Caco-2 (cell line): ENCODE measurements at regions of chr17 and their contacts with region 1.

Region 1: DNA sequence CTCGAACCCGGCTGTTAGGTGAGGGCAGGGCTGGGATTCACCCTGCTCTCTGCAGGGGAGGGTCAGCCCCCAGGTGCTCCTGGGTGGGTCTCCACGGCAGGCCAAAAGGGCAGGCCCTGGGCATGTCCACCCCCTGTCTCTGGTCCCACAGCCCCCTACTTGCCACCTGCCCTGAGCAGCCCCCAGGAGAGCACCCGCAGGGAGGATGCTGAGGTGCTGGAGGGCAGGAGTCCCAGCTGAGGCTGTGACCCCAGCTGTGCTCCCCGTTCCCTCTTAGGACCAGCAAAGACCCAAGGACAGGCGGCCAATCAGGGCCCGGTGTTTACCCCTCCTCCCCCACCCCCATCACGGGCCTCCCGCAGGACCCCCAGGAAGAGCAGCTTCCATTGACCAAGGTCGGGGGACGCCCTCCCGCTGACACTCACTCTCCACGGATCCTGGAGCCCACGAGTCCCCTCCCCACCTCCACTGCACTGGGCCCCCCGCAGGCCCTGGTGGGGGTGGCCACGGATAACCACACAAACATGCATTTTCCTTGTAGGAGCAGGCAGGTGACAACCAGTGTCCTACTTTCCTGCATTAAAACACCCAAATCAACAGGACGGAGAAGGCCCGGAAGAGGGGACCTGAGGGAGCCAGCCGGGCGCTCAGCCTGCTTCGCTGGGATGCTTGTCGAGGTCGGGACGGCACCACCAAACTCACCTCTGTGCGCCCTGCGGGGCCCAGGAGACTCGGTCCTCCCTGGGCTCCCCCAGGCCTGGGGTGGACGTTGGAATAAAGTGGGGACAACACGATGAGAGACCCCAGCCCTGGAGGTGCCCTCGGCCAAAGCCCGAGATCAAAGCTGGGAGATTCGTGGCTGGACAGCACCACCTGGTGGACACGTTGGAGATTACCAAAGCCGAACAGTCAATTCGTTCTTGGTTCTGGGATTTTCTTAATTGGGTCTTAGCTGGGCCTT is 22.5 kb upstream of the ENPP7 start:
- DNase-seq: peak; percentile 67 to 76
- H3K4me3 ChIP-seq: no peak overlapping the region
- H3K4me3 Mint-ChIP-seq: no peak overlapping the region
- H3K27ac Mint-ChIP-seq: no peak overlapping the region
- H3K4me1 ChIP-seq: no peaks in the 10 kb centered on the region
- H3K4me1 Mint-ChIP-seq: no peaks in the 10 kb centered on the region
- H3K27me3 ChIP-seq: no peaks in the 10 kb centered on the region
- H3K27me3 Mint-ChIP-seq: no peaks in the 10 kb centered on the region
- CTCF ChIP-seq: peak; percentile 78 to 94

Region 2: DNA sequence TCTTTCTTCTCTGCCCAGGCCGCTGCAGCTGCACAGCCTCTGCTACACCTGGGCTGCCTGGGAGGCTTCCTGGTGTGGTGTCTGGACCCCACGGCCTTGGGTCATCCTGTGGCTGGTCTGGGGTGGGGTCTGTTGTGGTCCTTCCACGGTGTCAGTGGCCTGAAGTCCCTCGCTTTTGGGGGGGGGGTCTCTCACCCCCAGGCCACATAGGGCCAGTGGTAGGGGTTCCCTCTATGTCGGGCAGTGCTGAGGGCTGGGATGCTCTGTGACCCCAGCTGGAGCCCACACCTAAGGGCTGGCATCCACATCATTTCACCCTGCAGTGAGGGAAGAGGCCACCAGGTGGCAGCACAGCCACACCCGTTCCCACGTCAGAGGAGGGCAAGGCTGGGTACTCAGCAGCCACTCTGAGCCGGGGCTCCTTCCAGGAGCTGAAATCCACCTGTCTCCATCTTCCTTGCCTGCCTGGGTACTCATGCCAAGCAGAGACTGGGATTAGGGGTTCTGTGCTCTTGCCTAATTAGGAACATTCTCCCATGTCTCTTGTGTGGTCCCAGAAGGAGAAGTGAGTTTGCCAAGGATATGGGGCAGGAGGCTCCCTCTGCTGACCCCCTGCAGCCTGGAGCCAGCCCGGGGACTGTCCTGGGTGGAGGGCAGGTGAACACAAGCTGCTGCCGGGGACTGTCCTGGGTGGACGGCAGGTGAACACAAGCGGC is 620.6 kb before region 1 on chr17:
- CTCF ChIA-PET with region 1: no interaction called
- POLR2A ChIA-PET with region 1: no interaction called
- intact Hi-C with region 1: loop called (anchors 1 kb)
- DNase-seq: peak; percentile 69 to 86
- H3K4me3 ChIP-seq: no peak overlapping the region
- H3K4me3 Mint-ChIP-seq: no peak overlapping the region
- H3K27ac Mint-ChIP-seq: no peak overlapping the region
- H3K4me1 ChIP-seq: no peaks in the 10 kb centered on the region
- H3K4me1 Mint-ChIP-seq: no peaks in the 10 kb centered on the region
- H3K27me3 ChIP-seq: no peaks in the 10 kb centered on the region
- H3K27me3 Mint-ChIP-seq: no peaks in the 10 kb centered on the region
- CTCF ChIP-seq: peak; percentile 84 to 95

Region 3: DNA sequence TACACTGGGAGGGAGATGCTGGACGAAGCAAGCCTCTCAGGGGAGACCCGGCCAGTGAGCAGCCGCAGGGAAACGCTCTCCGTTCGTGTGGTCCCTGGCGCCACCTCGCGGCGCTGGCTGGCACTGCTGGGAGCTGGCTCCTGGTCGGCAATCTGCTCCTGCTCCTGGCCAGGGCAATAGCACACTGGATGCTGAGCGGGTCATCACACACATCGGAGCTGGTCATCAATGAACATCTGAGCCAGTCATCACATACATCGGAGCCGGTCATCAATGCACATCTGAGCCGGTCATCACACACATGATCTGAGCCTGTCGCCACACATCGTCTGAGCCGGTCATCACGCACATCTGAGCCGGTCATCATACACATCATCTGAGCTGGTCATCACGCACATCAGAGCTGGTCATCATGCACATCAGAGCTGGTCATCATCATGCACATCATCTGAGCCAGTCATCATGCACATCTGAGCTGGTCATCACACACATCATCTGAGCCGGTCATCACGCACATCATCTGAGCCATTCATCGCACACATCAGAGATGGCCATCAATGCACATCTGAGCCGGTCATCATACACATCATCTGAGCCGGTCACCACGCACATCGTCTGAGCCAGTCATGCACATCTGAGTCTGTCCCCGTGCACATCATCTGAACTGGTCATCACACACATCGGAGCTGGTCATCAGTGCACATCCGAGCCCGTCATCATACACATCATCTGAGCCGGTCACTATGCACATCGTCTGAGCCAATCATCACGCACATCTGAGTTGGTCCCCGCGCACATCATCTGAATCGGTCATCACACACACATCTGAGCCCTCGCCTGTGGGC is 314.6 kb before region 1 on chr17:
- CTCF ChIA-PET with region 1: interaction called, 5 read pairs
- POLR2A ChIA-PET with region 1: no interaction called
- intact Hi-C with region 1: loop called (anchors 2 kb)
- DNase-seq: peak; percentile 76 to 89
- H3K4me3 ChIP-seq: no peak overlapping the region
- H3K4me3 Mint-ChIP-seq: no peak overlapping the region
- H3K27ac Mint-ChIP-seq: no peak overlapping the region
- H3K4me1 ChIP-seq: no peaks in the 10 kb centered on the region
- H3K4me1 Mint-ChIP-seq: no peaks in the 10 kb centered on the region
- H3K27me3 ChIP-seq: no peaks in the 10 kb centered on the region; the same call in none of the 2 replicates
- H3K27me3 Mint-ChIP-seq: peaks cover 47% of the 10 kb centered on the region
- CTCF ChIP-seq: peak; percentile 89 to 96

Region 4: GRCh38 chr17:79400989-79401703 is 307.1 kb before region 1 on chr17:
- CTCF ChIA-PET with region 1: interaction called, 18 read pairs
- POLR2A ChIA-PET with region 1: no interaction called
- intact Hi-C with region 1: no loop called
- DNase-seq: peak; percentile 76 to 84
- H3K4me3 ChIP-seq: 0 out of 2 replicates have a peak overlapping the region, but pooled peaks have one; percentile 19
- H3K4me3 Mint-ChIP-seq: peak overlapping the region; percentile 60
- H3K27ac Mint-ChIP-seq: no peak overlapping the region
- H3K4me1 ChIP-seq: peaks cover 11% of the 10 kb centered on the region; the same call in 1 of the 2 replicates
- H3K4me1 Mint-ChIP-seq: peaks cover 12% of the 10 kb centered on the region
- H3K27me3 ChIP-seq: peaks cover 3% of the 10 kb centered on the region
- H3K27me3 Mint-ChIP-seq: peaks cover 35% of the 10 kb centered on the region
- CTCF ChIP-seq: peak; percentile 93 to 94

Region 5: DNA sequence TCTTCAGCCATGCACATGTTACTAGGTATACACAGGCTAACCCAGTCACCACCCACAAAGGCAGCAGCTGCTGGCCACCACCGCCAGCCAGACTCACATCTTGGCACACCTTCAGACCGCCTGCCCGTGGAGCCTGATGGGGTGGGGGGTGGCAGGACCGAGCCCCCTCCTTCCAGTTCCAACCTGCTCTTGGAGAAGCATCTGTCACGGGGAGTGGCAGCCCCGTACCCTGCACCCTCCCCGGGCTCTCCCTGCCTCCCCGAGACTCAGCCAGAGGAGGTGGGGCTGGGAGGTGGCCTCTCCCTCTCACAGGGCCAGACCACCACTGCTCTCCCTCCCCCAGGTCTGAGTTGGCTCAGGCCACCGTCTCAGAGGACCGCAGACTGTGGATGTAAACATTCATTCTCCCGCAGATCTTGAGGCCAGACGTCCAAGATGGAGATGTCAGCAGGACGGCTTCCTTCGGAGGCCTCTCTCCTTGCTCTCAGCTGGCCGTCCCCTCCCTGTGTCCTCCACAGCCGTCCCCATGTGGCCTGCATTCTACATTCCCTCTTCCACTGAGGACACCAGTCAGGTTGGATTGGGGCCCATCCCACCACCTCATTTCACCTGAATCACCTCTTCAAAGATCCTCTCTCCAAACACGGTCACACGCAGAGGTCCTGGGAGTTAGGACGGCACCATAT is 85.9 kb before region 1 on chr17:
- CTCF ChIA-PET with region 1: no interaction called
- POLR2A ChIA-PET with region 1: no interaction called
- intact Hi-C with region 1: loop called (anchors 10 kb)
- DNase-seq: peak in 1 of 2 experiments; percentile 32
- H3K4me3 ChIP-seq: no peak overlapping the region
- H3K4me3 Mint-ChIP-seq: no peak overlapping the region
- H3K27ac Mint-ChIP-seq: peak overlapping the region; percentile 14
- H3K4me1 ChIP-seq: peaks cover 36% of the 10 kb centered on the region
- H3K4me1 Mint-ChIP-seq: peaks cover 10% of the 10 kb centered on the region
- H3K27me3 ChIP-seq: no peaks in the 10 kb centered on the region
- H3K27me3 Mint-ChIP-seq: no peaks in the 10 kb centered on the region
- CTCF ChIP-seq: no peak

Region 6: GRCh38 chr17:79664921-79665737 is 43.1 kb before region 1 on chr17:
- CTCF ChIA-PET with region 1: no interaction called
- POLR2A ChIA-PET with region 1: no interaction called
- intact Hi-C with region 1: loop called (anchors 5 kb)
- DNase-seq: peak; percentile 66 to 68
- H3K4me3 ChIP-seq: peak overlapping the region; percentile 32
- H3K4me3 Mint-ChIP-seq: peak overlapping the region; percentile 81
- H3K27ac Mint-ChIP-seq: peak overlapping the region; percentile 90
- H3K4me1 ChIP-seq: peaks cover 6% of the 10 kb centered on the region
- H3K4me1 Mint-ChIP-seq: peaks cover 12% of the 10 kb centered on the region
- H3K27me3 ChIP-seq: no peaks in the 10 kb centered on the region
- H3K27me3 Mint-ChIP-seq: peaks cover 2% of the 10 kb centered on the region
- CTCF ChIP-seq: no peak